A549 (cell line): ENCODE measurements at regions of chr2 and their contacts with region 1.

Region 1: GRCh38 chr2:176653479-176654443 is 384.5 kb downstream of the MTX2 start:
- DNase-seq: peak; percentile 44 to 74
- ATAC-seq: peak; percentile 97 to 98
- H3K4me3 ChIP-seq: no peak overlapping the region
- H3K27ac ChIP-seq: no peak overlapping the region
- H3K4me1 ChIP-seq: no peaks in the 10 kb centered on the region
- CTCF ChIP-seq: peak; percentile 53
- EP300 ChIP-seq: no peak
- POLR2A ChIP-seq: no peak
- RAD21 ChIP-seq: peak; percentile 38 to 49; a peak in 4 of 5 replicates

Region 2: DNA sequence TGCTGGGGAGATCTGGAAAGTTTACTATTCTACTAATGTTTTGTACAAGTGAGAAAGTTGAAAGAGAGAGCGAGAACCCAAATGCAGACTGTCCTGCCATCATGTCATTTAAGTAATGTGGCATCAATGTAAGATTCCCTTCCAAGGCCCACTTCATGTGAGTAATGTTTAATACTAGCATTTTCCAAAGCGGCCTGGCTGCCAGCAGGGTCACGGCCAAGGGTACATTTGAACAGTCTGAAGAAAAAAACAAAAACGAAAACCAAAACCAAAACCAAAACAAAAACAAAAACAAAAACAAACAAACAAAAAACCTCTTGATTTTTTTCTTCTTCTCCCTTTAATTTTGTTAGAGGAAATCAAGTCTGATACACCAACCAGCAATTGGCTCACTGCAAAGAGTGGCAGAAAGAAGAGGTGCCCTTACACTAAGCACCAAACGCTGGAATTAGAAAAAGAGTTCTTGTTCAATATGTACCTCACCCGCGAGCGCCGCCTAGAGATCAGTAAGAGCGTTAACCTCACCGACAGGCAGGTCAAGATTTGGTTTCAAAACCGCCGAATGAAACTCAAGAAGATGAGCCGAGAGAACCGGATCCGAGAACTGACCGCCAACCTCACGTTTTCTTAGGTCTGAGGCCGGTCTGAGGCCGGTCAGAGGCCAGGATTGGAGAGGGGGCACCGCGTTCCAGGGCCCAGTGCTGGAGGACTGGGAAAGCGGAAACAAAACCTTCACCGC is 535.0 kb before region 1 on chr2:
- CTCF ChIA-PET with region 1: interaction called, 12 read pairs
- POLR2A ChIA-PET with region 1: no interaction called
- DNase-seq: peak; percentile 63 to 79
- ATAC-seq: peak; percentile 31 to 46; a peak in 3 of 6 replicates
- H3K4me3 ChIP-seq: peak overlapping the region; percentile 30; the same call in 2 of the 3 replicates
- H3K27ac ChIP-seq: peak overlapping the region in 1 of 2 experiments; percentile 30; a peak in 1 of 6 replicates
- H3K4me1 ChIP-seq: 0 out of 3 replicates have a peak, but pooled peaks cover 3% of the 10 kb centered on the region
- CTCF ChIP-seq: peak; percentile 75
- EP300 ChIP-seq: no peak
- POLR2A ChIP-seq: no peak
- RAD21 ChIP-seq: peak; percentile 22; a peak in 1 of 5 replicates

Region 3: DNA sequence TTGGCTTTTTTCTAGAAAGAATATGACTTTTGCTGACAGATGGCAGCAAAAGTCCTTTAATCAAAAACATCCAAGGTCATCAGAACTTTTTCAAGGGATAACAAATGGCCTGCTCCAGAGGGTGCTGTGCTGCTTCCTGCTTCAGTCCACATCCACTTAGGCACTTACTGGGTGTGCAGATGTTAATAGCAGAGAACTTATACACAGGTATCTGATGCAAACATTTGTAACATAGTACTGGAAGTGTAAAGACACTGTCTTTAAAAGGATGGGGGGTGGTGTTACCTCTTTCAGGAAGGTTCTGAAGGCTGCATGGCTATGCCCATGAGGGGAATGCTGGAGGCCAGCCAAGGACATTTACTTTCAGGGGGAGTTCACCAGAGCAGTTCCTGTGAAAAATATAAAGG is 518.7 kb before region 1 on chr2:
- CTCF ChIA-PET with region 1: interaction called, 216 read pairs
- POLR2A ChIA-PET with region 1: interaction called, 9 read pairs
- DNase-seq: peak in 1 of 2 experiments; percentile 15
- ATAC-seq: no peak
- H3K4me3 ChIP-seq: no peak overlapping the region
- H3K27ac ChIP-seq: peak overlapping the region; percentile 80 to 87; a peak in 3 of 6 replicates
- H3K4me1 ChIP-seq: peaks cover 10% of the 10 kb centered on the region; the same call in 2 of the 3 replicates
- CTCF ChIP-seq: no peak
- EP300 ChIP-seq: no peak
- POLR2A ChIP-seq: no peak
- RAD21 ChIP-seq: peak; percentile 36 to 50; a peak in 3 of 5 replicates

Region 4: DNA sequence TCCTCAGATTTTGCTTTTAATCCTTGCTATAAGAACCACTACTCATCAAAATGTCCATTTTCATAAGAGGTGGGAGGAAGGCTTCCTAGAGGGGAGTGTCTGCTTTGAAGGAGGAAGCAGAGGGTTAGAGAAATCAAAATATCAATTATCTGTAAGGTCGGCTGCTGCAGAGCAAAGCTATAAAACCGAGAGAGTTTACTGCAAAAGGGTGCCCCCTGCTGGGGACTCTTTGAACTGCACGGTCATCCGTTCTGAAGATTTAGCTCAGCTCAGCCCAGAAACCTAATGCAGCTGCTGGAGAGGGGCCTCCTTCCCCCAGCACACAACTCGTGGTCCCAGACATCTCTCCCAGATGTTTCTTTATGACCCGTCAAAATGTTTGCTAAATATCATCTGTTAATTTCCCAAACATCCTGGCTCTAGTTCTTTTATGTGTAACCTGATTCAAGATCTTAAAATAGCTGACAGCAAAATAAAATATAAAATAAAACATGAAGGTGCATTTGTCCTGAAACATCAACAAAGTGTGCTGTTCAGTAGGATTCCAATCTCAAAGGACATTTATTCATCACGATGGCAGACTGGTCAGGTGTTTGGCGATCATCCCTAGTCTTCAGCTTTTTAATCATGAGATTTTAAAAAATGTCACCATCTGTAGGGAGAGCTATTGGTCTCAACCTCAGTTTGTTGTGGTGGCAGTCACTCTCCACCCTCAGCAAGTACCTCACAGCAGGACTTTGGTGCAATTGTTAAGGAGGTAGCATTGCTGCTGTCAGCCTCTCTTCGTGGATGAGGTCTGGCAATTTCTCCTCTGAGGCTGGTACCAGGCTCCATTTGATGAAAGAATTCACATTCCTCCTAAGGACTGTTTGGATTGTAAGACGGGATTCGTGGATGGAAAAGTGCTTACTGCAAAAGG is 198.6 kb before region 1 on chr2:
- CTCF ChIA-PET with region 1: interaction called, 11 read pairs
- POLR2A ChIA-PET with region 1: interaction called, 4 read pairs
- DNase-seq: peak; percentile 31 to 59
- ATAC-seq: peak; percentile 87 to 93
- H3K4me3 ChIP-seq: no peak overlapping the region
- H3K27ac ChIP-seq: no peak overlapping the region
- H3K4me1 ChIP-seq: no peaks in the 10 kb centered on the region
- CTCF ChIP-seq: peak; percentile 90
- EP300 ChIP-seq: no peak
- POLR2A ChIP-seq: no peak
- RAD21 ChIP-seq: peak; percentile 83 to 86

Region 5: GRCh38 chr2:176638167-176639015 is 15.4 kb before region 1 on chr2:
- CTCF ChIA-PET with region 1: interaction called, 60 read pairs
- POLR2A ChIA-PET with region 1: no interaction called
- DNase-seq: peak; percentile 68 to 69
- ATAC-seq: peak; percentile 92 to 96
- H3K4me3 ChIP-seq: peak overlapping the region; percentile 66
- H3K27ac ChIP-seq: peak overlapping the region; percentile 88 to 95
- H3K4me1 ChIP-seq: peaks cover 11% of the 10 kb centered on the region; the same call in 2 of the 3 replicates
- CTCF ChIP-seq: peak; percentile 96
- EP300 ChIP-seq: no peak
- POLR2A ChIP-seq: no peak
- RAD21 ChIP-seq: peak; percentile 87 to 98

Region 6: DNA sequence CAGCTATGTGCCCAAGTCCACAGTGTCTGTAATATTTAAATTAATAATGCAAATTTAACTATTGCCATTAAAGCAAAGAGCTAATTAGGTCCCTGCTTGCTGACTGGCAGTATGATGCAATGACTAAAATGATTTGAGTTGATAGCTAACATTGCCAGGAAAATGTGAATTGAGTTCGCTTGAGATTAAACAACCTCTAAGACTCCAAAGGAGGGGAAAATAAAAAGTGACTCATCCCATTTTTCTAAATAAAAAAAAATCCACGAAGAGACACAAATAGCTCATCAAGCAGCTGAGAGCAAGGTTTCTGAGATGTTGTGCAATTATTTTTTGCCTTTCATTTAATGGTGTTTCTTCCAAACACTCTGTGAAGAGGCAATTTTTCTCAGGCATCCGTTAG is 28.5 kb after region 1 on chr2:
- CTCF ChIA-PET with region 1: interaction called, 16 read pairs
- POLR2A ChIA-PET with region 1: no interaction called
- DNase-seq: no peak
- ATAC-seq: no peak
- H3K4me3 ChIP-seq: no peak overlapping the region
- H3K27ac ChIP-seq: no peak overlapping the region
- H3K4me1 ChIP-seq: no peaks in the 10 kb centered on the region
- CTCF ChIP-seq: no peak
- EP300 ChIP-seq: no peak
- POLR2A ChIP-seq: no peak
- RAD21 ChIP-seq: no peak